Cardiac septum (tissue), 1 donor: ENCODE measurements at regions of chr2 and their contacts with region 1.

Region 1: DNA sequence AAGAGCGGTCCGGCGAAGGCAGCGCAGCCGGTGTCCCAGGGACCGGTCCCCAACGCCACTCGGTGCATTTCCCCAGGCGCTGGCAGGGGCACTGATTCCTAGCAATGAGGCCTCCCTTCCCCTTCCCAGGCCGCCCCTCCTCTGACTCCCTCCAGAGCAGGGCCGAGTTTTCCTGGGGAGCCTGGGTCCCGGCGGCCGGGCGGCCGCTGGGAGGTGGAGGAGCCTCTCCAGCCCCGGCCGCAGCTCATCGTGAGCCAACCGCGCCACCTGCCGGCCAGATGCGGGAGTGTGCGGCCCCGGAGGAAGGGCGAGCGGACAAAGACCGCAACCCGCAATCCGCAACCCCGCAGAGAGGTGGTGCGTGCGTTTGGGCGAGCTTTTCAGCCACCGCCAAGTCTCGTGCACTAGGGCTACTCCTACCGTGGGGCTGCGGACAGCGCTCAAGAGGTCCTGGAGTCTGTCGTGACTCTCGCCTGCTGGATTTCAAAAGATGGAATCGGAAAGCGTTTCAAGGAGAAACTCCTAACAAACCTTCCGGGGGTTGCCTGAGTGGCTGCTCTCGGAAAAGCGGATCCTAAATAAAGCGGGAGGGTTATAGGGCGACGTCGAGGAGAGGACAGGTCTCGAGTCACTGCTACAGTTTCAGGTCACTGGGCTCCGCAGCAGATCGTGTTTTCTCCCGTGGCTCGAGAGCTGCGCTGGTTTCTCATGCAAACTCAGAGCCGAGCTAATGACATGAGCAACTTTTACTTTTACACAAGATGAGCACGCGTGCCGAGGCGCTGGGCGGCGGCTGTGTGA is 1.5 kb upstream of the EPHA4 start:
- DNase-seq: peak; percentile 92

Region 2: GRCh38 chr2:219736209-219736608 is 1837.4 kb before region 1 on chr2:
- intact Hi-C with region 1: loop called (anchors 2 kb)
- DNase-seq: no peak

Region 3: GRCh38 chr2:220104871-220105351 is 1468.7 kb before region 1 on chr2:
- intact Hi-C with region 1: loop called (anchors 10 kb)
- DNase-seq: no peak

Region 4: GRCh38 chr2:221104361-221104811 is 469.2 kb before region 1 on chr2:
- intact Hi-C with region 1: loop called (anchors 2 kb)
- DNase-seq: peak; percentile 91

Region 5: DNA sequence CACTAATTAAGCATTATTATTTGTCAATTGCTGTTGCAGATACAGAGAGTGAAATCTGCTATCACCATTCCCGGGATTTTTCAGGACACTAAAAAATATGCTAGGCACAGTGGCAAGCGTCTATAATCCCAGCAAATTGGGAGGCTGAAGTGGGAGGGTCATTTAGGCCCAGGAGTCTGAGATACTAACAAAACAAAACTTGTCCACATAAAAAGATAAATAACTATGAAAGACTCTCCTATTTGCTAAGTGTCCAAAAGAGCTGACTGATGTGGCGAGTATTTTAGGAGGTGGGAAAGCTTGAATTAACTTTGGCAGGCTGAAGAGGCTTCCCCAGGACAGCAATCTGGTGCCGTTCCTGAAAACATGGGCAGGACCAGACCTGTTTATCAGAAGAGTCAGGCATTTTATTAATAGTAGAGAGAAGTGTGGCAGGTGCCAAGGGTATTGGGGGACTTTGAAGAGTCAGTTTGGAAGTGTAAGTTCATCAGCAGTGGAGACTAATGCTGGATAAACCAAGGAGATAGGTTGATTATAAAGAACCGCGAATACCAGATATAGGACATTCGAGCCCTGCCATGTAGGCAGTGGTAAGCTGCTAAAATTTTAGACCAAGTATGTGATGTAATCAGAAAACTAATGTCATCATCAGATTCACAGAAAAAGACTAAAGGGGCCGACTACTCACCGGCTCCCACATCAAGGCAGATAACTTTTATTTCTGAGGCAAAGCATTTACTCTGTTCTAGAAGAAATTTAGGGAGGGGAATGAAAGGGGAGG is 203.4 kb before region 1 on chr2:
- intact Hi-C with region 1: loop called (anchors 2 kb)
- DNase-seq: no peak

Region 6: DNA sequence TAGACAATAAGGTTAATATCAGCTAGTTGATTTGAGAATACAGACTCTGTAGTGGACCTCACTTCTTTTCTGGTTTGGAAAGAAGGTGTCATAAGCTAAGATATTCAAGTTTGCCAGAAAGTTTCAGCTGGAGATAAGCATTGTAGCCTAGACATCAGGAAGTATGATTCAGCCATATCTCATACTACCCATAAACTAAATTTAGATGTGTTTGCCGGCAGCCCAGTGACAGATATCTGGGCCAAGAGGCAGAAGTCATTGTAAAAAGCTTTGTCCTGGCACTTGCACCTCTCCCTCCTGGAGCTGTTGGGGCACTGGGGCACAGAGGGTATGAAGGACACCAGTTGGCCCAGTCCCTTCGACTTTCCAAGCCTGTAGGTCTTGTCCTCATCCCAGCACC is 129.5 kb before region 1 on chr2:
- intact Hi-C with region 1: loop called (anchors 2 kb)
- DNase-seq: no peak

Region 7: GRCh38 chr2:221969087-221969829 is 395.6 kb after region 1 on chr2:
- intact Hi-C with region 1: loop called (anchors 10 kb)
- DNase-seq: no peak